ENCODE measurements at regions of chr17 and their contacts with region 1.

Region 1: DNA sequence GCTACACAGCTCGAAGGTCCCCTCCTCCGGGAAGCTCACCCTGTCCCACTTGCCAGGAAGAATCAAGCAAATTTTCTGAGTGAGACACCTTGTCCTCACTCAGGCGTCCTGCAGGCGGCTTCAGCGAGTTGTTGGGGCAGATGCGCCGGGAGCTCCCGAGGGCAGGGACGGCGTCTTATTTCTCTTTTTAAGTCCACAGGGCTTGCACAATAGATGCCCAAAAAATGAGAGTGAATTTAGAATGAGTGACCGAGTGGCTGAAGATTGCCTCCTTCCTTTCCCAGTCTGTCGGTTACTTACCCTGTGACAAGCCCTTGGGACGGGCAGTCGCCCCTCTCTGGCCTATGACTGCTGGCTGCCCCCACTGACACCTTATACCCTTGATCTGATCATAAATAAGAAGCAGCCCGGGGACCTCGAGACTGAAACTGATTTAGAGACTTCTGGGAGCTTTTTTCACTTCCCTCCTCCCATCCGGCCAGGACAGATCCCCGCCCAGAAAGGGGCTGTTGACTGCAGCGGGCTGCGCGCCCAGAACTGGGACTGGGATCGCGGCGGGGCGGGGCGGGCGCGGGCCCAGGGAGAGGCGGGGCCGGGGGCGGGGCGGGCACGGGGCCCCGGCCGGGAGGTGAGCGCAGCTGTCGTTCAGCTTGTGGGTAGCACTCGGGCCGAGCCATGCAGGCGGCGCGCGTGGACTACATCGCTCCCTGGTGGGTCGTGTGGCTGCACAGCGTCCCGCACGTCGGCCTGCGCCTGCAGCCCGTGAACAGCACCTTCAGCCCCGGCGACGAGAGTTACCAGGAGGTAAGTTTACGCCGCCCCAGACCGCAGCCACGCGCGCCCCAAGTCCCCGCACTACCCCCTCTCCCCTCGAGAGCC is at the start of gene TTYH2:
- DNase-seq: peak; percentile 94
- ATAC-seq: peak; percentile 93
- H3K4me3 ChIP-seq: peak within 1 kb of the TSS; percentile 71
- H3K27ac ChIP-seq: peak within 1 kb of the TSS; percentile 80
- H3K4me1 ChIP-seq: peaks cover 35% of the 10 kb centered on the region
- H3K27me3 ChIP-seq: no peaks in the 10 kb centered on the region
- CTCF ChIP-seq: peak; percentile 37
- total RNA-seq, gene TTYH2: 7.4 TPM

Region 2: DNA sequence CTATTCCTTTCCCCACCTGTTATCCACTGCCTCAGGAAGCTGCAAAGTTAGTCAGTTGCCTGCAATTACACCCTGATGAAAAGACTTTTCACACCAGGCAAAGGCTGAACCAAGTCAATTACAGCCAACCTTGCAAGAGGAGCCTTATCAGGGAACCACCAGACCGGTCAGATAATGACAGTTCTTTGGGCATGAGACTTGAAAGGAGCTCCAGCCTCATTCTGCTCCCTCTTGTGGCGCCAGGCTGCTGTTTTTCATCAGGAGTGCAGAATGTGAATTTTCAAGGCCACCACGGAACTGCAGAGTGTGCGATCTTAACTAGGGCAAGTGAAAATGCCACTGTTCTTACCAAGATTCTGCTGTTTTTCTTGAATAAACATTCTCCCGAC is 83.4 kb after region 1 on chr17:
- intact Hi-C with region 1: loop called (anchors 5 kb)
- DNase-seq: no peak
- ATAC-seq: peak; percentile 82
- H3K4me3 ChIP-seq: no peak overlapping the region
- H3K27ac ChIP-seq: no peak overlapping the region
- H3K4me1 ChIP-seq: no peaks in the 10 kb centered on the region
- H3K27me3 ChIP-seq: peaks cover 15% of the 10 kb centered on the region
- CTCF ChIP-seq: peak; percentile 58

Region 3: GRCh38 chr17:74332763-74333283 is 119.7 kb after region 1 on chr17:
- intact Hi-C with region 1: no loop called
- DNase-seq: no peak
- ATAC-seq: no peak
- H3K4me3 ChIP-seq: no peak overlapping the region
- H3K27ac ChIP-seq: no peak overlapping the region
- H3K4me1 ChIP-seq: no peaks in the 10 kb centered on the region
- H3K27me3 ChIP-seq: peaks cover 8% of the 10 kb centered on the region
- CTCF ChIP-seq: no peak